BJ (cell line): ENCODE measurements at regions of chr3 and their contacts with region 1.

Region 1: GRCh38 chr3:21705769-21706168 is 45.2 kb downstream of the ZNF385D start:
- DNase-seq: peak; percentile 51
- H3K4me3 ChIP-seq: no peak overlapping the region
- H3K27me3 ChIP-seq: no peaks in the 10 kb centered on the region
- CTCF ChIP-seq: no peak

Region 2: DNA sequence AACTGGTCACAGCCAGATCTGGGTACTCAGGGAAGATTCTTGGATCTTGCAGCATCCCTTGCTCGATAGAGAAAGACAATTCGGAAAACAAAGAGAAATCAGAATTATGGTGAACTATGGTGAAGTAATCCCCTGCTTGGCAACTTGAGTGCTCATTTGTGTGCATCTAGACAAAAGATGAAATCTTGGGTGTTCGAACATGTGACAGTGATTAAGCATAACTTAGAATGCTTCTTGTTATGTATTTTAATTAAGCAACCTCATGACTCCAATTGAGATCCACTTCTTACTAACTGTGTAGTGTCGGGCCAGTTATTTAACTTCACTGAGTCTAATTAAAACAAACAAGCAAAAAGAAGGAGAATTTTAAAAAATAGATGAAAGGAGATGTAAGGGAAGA is 11.3 kb before region 1 on chr3:
- CTCF ChIA-PET with region 1: interaction called, 10 read pairs
- POLR2A ChIA-PET with region 1: no interaction called
- DNase-seq: no peak
- H3K4me3 ChIP-seq: no peak overlapping the region
- H3K27me3 ChIP-seq: no peaks in the 10 kb centered on the region
- CTCF ChIP-seq: no peak